Psoas muscle (tissue), 8 donors: ENCODE measurements at regions of chr12 and their contacts with region 1.

Region 1: GRCh38 chr12:113048716-113049127 is 7.8 kb upstream of the DTX1 start:
- DNase-seq: peak in 1 of 2 donors; percentile 56
- ATAC-seq: peak; percentile 49 to 67 (median 54)
- H3K4me3 ChIP-seq: no peak overlapping the region
- H3K27ac ChIP-seq: no peak overlapping the region
- H3K4me1 ChIP-seq: no peaks in the 10 kb centered on the region
- H3K27me3 ChIP-seq: peaks cover 0 to 19% (median 11%) of the 10 kb centered on the region in 3 donors
- CTCF ChIP-seq: peak; percentile 72

Region 2: GRCh38 chr12:113065126-113066007 is 16.6 kb after region 1 on chr12:
- intact Hi-C with region 1: no loop called
- DNase-seq: peak in 1 of 2 donors; percentile 64
- ATAC-seq: no peak
- H3K4me3 ChIP-seq: no peak overlapping the region
- H3K27ac ChIP-seq: no peak overlapping the region
- H3K4me1 ChIP-seq: no peaks in the 10 kb centered on the region
- H3K27me3 ChIP-seq: peaks cover 0 to 58% (median 4%) of the 10 kb centered on the region in 3 donors
- CTCF ChIP-seq: no peak

Region 3: DNA sequence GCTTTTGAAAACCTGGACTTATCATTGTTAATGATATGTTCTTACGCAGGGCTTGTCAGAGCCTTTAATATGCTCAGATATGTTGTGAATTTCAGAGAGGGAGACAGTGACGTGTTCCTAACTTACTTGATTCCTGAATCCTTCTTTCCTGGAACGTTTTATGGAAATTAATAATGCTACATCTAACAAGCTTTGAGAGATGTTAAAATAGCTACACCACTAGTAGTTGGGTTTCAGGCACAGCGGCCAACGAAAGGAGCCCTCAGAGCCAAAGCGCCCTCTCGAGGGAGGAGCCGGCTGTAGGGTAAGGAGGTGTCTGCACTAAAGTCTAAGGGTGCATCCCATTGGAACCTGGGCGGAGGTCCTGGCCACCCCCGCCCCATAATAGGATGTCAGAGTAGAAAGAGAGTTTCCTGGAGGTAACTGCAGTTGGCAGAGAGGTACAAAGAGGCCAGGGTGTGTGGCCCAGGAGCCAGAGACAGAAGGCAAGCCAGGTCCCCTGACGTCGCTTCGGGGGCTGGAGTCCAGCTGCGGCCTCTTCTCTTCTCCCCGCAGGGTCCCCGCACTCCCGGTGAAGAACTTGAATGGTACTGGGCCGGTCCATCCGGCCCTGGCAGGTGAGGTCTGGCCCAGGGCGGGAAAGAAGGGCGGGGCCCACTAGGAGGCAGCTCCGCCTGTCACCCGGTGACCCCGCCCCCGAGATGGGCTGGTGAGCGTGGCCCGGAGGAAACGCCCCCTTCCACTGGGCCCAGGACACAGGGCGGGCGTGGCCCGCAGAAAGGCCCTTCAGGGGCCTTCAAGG is 44.1 kb after region 1 on chr12:
- intact Hi-C with region 1: no loop called
- DNase-seq: peak; percentile 53 to 65
- ATAC-seq: no peak
- H3K4me3 ChIP-seq: no peak overlapping the region
- H3K27ac ChIP-seq: no peak overlapping the region
- H3K4me1 ChIP-seq: no peaks in the 10 kb centered on the region
- H3K27me3 ChIP-seq: peaks cover 0 to 46% (median 6%) of the 10 kb centered on the region in 3 donors
- CTCF ChIP-seq: no peak

Region 4: GRCh38 chr12:113152835-113153814 is 104.4 kb after region 1 on chr12:
- intact Hi-C with region 1: loop called (anchors 5 to 10 kb)
- DNase-seq: peak; percentile 62 to 75
- ATAC-seq: peak; percentile 70 to 76 (median 72)
- H3K4me3 ChIP-seq: peak overlapping the region; percentile 50
- H3K27ac ChIP-seq: no peak overlapping the region
- H3K4me1 ChIP-seq: peaks cover 8% of the 10 kb centered on the region
- H3K27me3 ChIP-seq: peaks cover 0 to 59% (median 9%) of the 10 kb centered on the region in 3 donors
- CTCF ChIP-seq: no peak

Region 5: GRCh38 chr12:113174461-113175384 is 126.0 kb after region 1 on chr12:
- intact Hi-C with region 1: loop called in 1 of 2 experiments (anchors 2 kb)
- DNase-seq: peak; percentile 66 to 87
- ATAC-seq: peak; percentile 52 to 89 (median 74)
- H3K4me3 ChIP-seq: no peak overlapping the region
- H3K27ac ChIP-seq: no peak overlapping the region
- H3K4me1 ChIP-seq: no peaks in the 10 kb centered on the region
- H3K27me3 ChIP-seq: no peaks in the 10 kb centered on the region
- CTCF ChIP-seq: peak; percentile 97